Activated T-helper 1 cell treated with anti-CD3 and anti-CD28 coated beads, Interleukin-12 subunit alpha, Interleukin-12 subunit beta, Interleukin-2, Interleukin-4 antibody, amounts not matched to agents 30 ng/mL and 10 ng/mL and 1 ng/mL, durations not matched to agents 14 hours and 24 hours and 36 hours (primary cell): ENCODE measurements at regions of chr15 and their contacts with region 1.

Region 1: DNA sequence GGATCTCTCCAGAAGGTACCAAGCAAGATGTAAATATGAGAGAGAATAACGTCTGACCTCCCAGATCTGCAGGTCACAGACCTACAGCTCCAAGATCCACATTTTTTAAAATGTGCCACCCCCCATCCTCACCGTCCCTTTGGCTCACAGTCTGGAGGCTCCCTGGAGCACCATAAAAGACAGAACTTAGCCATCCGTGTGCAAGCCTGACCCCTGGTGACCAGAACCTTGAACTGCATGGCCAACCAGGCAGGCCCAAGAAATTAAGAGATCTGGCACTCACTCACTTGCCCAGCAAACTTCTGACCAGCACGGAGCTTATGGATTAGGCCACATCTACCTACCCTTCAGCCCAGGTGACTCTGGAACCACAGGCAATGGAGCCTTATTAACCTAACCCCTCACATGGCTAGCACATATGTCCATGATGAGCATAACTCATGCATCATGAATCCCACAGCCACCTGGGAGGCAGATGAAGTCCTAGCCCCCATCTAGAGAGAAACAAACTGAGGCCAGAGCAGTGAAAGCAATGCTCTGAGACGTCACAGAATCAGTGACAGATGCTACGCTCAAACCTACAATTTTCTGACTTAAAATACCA is 275.3 kb downstream of the UACA start:
- DNase-seq: peak; percentile 61
- H3K4me3 Mint-ChIP-seq: no peak overlapping the region
- H3K27ac Mint-ChIP-seq: peak overlapping the region; percentile 77
- H3K4me1 Mint-ChIP-seq: peaks cover 97% of the 10 kb centered on the region
- H3K27me3 Mint-ChIP-seq: peaks cover 38% of the 10 kb centered on the region

Region 2: GRCh38 chr15:69475769-69476358 is 1012.2 kb before region 1 on chr15:
- intact Hi-C with region 1: loop called (anchors 1 kb)
- DNase-seq: peak; percentile 55
- H3K4me3 Mint-ChIP-seq: no peak overlapping the region
- H3K27ac Mint-ChIP-seq: no peak overlapping the region
- H3K4me1 Mint-ChIP-seq: no peaks in the 10 kb centered on the region
- H3K27me3 Mint-ChIP-seq: peaks cover 23% of the 10 kb centered on the region

Region 3: GRCh38 chr15:69755551-69756310 is 732.4 kb before region 1 on chr15:
- intact Hi-C with region 1: loop called (anchors 1 kb)
- DNase-seq: peak; percentile 79
- H3K4me3 Mint-ChIP-seq: peak overlapping the region; percentile 70
- H3K27ac Mint-ChIP-seq: peak overlapping the region; percentile 87
- H3K4me1 Mint-ChIP-seq: peaks cover 72% of the 10 kb centered on the region
- H3K27me3 Mint-ChIP-seq: peaks cover 2% of the 10 kb centered on the region

Region 4: GRCh38 chr15:70140543-70141375 is 347.3 kb before region 1 on chr15:
- intact Hi-C with region 1: loop called (anchors 1 kb)
- DNase-seq: peak; percentile 8
- H3K4me3 Mint-ChIP-seq: peak overlapping the region; percentile 54
- H3K27ac Mint-ChIP-seq: peak overlapping the region; percentile 53
- H3K4me1 Mint-ChIP-seq: peaks cover 33% of the 10 kb centered on the region
- H3K27me3 Mint-ChIP-seq: peaks cover 28% of the 10 kb centered on the region

Region 5: GRCh38 chr15:70437882-70438331 is 50.2 kb before region 1 on chr15:
- intact Hi-C with region 1: loop called (anchors 2 kb)
- DNase-seq: no peak
- H3K4me3 Mint-ChIP-seq: no peak overlapping the region
- H3K27ac Mint-ChIP-seq: no peak overlapping the region
- H3K4me1 Mint-ChIP-seq: peaks cover 24% of the 10 kb centered on the region
- H3K27me3 Mint-ChIP-seq: peaks cover 34% of the 10 kb centered on the region

Region 6: DNA sequence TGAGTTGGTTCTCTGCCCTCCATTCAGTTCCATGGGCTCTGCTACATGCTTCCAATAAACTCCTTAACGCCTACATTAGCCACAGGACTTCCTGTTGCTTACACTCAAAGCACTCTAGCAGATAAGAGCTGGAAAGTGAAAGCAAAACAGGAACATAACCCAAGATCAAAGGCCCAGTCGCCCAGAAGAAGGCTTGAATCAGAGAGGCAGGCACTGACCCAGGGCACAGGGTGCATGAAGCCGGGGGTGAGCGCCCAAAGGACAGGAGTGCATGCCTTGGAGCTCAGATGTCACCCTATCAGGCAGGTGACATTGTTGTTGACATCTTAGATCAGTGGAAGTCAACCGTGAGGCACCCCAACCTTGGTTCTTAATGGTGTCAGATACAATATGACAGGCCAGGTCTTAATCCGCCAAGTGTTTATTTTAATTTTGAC is 40.2 kb after region 1 on chr15:
- intact Hi-C with region 1: loop called (anchors 1 kb)
- DNase-seq: peak; percentile 60
- H3K4me3 Mint-ChIP-seq: peak overlapping the region; percentile 27
- H3K27ac Mint-ChIP-seq: peak overlapping the region; percentile 50
- H3K4me1 Mint-ChIP-seq: peaks cover 32% of the 10 kb centered on the region
- H3K27me3 Mint-ChIP-seq: peaks cover 11% of the 10 kb centered on the region

Region 7: DNA sequence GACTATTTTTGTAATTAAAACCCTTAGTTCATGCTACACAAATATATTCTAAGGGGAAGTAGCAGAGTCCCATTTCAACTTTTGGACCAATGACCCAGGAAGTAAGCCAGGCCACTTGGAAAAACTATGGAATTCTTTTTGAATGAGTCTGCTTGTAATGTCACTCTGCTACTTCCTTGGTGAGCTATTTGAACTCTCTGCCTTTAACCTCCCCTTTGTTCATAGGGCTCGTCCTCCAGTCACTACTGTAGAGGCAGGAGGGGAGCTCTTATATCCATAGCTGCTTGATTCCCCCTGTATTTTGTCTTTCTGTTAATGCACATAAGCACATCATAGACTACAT is 155.7 kb after region 1 on chr15:
- intact Hi-C with region 1: no loop called
- DNase-seq: no peak
- H3K4me3 Mint-ChIP-seq: no peak overlapping the region
- H3K27ac Mint-ChIP-seq: no peak overlapping the region
- H3K4me1 Mint-ChIP-seq: no peaks in the 10 kb centered on the region
- H3K27me3 Mint-ChIP-seq: peaks cover 16% of the 10 kb centered on the region